ENCODE measurements at regions of chr19 and their contacts with region 1.

Region 1: DNA sequence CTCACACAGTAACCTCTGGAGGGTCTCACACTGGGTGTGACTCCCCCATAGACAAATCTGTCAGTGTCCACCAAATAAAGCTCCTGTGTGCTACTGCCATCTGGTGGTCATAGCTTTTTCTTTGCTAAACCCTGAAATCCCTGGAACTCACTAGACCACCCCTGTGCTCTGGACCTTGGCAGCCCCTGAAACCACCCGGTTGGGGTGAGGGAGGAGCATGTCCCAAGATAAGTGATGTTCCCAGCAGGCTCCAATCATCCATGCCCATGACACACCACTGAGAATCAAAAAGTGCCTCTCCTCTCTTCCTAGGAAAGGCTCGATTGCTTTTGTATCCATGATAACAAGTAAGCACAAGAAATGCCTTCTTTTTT is 6.5 kb upstream of the HSD17B14 start:
- DNase-seq: peak; percentile 72
- ATAC-seq: peak; percentile 57
- H3K4me3 Mint-ChIP-seq: no peak overlapping the region
- H3K27ac Mint-ChIP-seq: no peak overlapping the region
- H3K4me1 Mint-ChIP-seq: peaks cover 2% of the 10 kb centered on the region
- H3K27me3 Mint-ChIP-seq: no peaks in the 10 kb centered on the region

Region 2: DNA sequence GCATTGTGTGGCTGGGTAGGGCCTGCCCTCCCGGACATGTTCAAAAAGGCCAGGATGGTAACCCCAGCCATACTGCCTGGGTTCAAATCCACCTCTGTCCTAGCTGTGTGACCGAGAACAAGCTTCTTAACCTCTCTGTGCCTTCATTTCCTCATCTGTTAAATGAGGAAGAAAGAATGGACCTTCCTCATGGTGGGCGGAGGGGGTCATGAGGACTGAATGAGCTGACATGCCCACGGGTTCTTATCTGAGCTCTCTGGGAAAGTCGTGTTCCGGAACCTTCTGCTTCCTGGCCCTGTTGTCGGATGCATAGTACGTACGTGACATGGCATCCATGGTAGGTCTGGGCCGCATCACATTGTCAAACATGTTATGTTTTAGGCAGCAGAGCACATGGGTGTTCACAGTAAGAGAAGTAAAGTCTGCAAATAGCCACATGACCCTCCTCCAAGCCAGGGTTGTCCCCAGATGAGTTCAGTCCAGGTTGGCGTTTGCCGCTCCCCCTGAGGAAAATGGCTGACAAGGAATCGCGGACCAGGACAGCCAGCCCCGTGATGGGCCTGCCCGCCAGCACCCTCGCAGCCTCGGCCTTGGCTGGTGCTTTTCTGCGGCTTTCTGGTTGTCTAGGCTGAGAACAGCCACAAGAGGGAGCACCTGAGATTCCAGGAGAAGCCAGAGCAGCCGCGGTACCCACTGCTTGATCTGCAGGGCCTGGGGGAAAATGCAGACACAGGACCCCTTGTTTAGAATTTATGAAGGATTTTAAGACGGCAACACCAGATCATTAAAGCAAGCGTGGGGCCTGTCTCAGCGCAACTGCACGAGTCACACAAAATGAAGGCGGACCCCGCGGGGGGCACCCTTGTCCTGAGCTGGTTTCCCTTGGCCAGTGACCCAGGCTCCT is 167.6 kb before region 1 on chr19:
- CTCF ChIA-PET with region 1: interaction called, 16 read pairs
- POLR2A ChIA-PET with region 1: no interaction called
- DNase-seq: peak; percentile 84
- ATAC-seq: peak; percentile 94
- H3K4me3 Mint-ChIP-seq: no peak overlapping the region
- H3K27ac Mint-ChIP-seq: no peak overlapping the region
- H3K4me1 Mint-ChIP-seq: peaks cover 6% of the 10 kb centered on the region
- H3K27me3 Mint-ChIP-seq: no peaks in the 10 kb centered on the region

Region 3: GRCh38 chr19:48853483-48853882 is 10.7 kb after region 1 on chr19:
- CTCF ChIA-PET with region 1: interaction called, 13 read pairs
- POLR2A ChIA-PET with region 1: interaction called, 4 read pairs
- DNase-seq: no peak
- ATAC-seq: no peak
- H3K4me3 Mint-ChIP-seq: no peak overlapping the region
- H3K27ac Mint-ChIP-seq: no peak overlapping the region
- H3K4me1 Mint-ChIP-seq: no peaks in the 10 kb centered on the region
- H3K27me3 Mint-ChIP-seq: no peaks in the 10 kb centered on the region

Region 4: GRCh38 chr19:48899781-48900476 is 57.2 kb after region 1 on chr19 and contains the start of gene NUCB1:
- CTCF ChIA-PET with region 1: interaction called, 11 read pairs
- POLR2A ChIA-PET with region 1: no interaction called
- DNase-seq: peak; percentile 100
- ATAC-seq: peak; percentile 92
- H3K4me3 Mint-ChIP-seq: peak within 1 kb of the TSS; percentile 98
- H3K27ac Mint-ChIP-seq: peak within 1 kb of the TSS; percentile 96
- H3K4me1 Mint-ChIP-seq: peaks cover 42% of the 10 kb centered on the region
- H3K27me3 Mint-ChIP-seq: peaks cover 8% of the 10 kb centered on the region
- total RNA-seq, gene NUCB1: 229 to 236 TPM

Measured in activated CD8-positive, alpha-beta T cell treated with anti-CD3 and anti-CD28 coated beads, Interleukin-2, amount 10 ng/mL, durations not matched to agents 7 days and 5 days (primary cell).